K562 (cell line): ENCODE measurements at regions of chr6 and their contacts with region 1.

Region 1: GRCh38 chr6:154661768-154662167 is 71.4 kb upstream of the SCAF8 start:
- DNase-seq: no peak
- ATAC-seq: 0 out of 3 replicates have a peak, but pooled peaks have one; percentile 49
- H3K4me3 ChIP-seq: no peak overlapping the region
- H3K27ac ChIP-seq: no peak overlapping the region
- H3K4me1 ChIP-seq: no peaks in the 10 kb centered on the region
- H3K27me3 ChIP-seq: peaks cover 15 to 17% of the 10 kb centered on the region in 2 experiments; a peak in 4 of 5 replicates
- CTCF ChIP-seq: peak; percentile 18 to 37 (median 24); a peak in 1 of 6 replicates
- EP300 ChIP-seq: no peak
- POLR2A ChIP-seq: no peak
- RAD21 ChIP-seq: 0 out of 4 replicates have a peak, but pooled peaks of 1 of the 2 experiments have one; percentile 11

Region 2: DNA sequence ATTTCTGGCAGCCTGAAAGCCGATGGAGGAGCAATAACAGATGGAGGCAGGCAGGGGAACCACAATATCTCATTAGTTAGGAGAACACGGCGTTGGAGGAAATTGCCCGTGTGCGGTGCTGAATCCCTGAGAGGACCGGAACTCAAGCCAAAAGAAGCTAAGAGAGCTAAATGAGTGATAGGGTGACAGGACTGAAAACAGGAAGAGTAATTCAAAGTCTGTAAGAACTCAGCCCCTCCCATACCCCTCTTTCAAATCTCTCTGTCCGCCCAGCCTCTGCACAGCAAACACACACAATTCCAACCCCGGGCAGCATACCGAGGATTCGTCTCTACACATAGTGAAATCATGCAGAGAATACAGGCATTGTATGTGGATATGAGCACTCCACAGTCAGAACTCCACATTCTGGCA is 302.6 kb before region 1 on chr6:
- CTCF ChIA-PET with region 1: no interaction called
- POLR2A ChIA-PET with region 1: no interaction called
- in situ Hi-C with region 1: no loop called
- intact Hi-C with region 1: loop called (anchors 5 kb)
- DNase-seq: peak in 1 of 4 experiments; percentile 13
- ATAC-seq: peak; percentile 50
- H3K4me3 ChIP-seq: no peak overlapping the region
- H3K27ac ChIP-seq: no peak overlapping the region
- H3K4me1 ChIP-seq: peaks cover 0 to 9% of the 10 kb centered on the region in 2 experiments; a peak in 1 of 5 replicates
- H3K27me3 ChIP-seq: peaks cover 16 to 21% of the 10 kb centered on the region in 2 experiments; a peak in 4 of 5 replicates
- CTCF ChIP-seq: no peak
- EP300 ChIP-seq: no peak
- POLR2A ChIP-seq: no peak
- RAD21 ChIP-seq: no peak

Region 3: DNA sequence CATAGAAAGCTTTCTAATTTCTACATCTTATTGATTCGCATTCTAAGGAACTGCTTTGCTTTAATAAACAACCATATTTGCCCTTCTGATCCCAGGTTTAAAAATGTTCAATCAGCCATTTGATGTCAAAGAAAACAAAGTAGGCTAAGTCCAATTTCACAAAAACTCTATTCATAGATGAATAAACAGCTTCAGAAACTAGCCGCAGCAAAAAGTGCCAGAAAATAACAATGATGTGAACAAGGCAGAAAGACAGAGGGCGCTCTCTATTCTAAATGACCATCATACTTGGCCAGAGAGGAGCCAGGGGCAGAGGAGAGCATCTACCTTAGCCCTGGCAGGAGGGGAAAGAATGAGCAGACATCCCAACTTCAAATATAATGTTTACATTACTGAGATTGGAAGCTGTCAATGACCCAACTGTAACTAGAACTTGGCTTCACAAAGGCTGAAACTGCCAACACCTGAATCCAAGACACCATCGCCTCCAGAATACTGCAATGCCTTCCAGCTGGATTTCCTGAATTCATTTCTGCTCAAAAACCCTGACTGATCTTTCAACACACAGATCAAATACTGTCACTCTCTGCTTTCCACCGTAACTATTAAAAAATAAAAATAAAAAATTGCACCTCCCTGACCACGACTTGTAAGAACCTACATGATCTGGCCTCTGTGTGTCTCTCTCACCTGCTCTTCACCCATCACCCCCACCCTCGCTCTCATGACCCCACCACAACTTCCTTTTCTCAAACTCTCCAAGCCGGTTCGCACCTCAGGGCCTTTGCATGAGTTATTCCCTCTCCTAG is 160.8 kb before region 1 on chr6:
- CTCF ChIA-PET with region 1: no interaction called
- POLR2A ChIA-PET with region 1: no interaction called
- in situ Hi-C with region 1: no loop called
- intact Hi-C with region 1: loop called (anchors 1 kb)
- DNase-seq: peak in 3 of 4 experiments; percentile 40 to 62 (median 57)
- ATAC-seq: peak; percentile 85
- H3K4me3 ChIP-seq: no peak overlapping the region
- H3K27ac ChIP-seq: no peak overlapping the region
- H3K4me1 ChIP-seq: peaks cover 5 to 6% of the 10 kb centered on the region in 2 experiments; a peak in 4 of 5 replicates
- H3K27me3 ChIP-seq: no peaks in the 10 kb centered on the region
- CTCF ChIP-seq: peak; percentile 75 to 82 (median 77)
- EP300 ChIP-seq: no peak
- POLR2A ChIP-seq: no peak
- RAD21 ChIP-seq: peak; percentile 34 to 49; a peak in 3 of 4 replicates

Region 4: GRCh38 chr6:154638369-154638768 is 23.4 kb before region 1 on chr6:
- CTCF ChIA-PET with region 1: no interaction called
- POLR2A ChIA-PET with region 1: no interaction called
- in situ Hi-C with region 1: no loop called
- intact Hi-C with region 1: no loop called
- DNase-seq: no peak
- ATAC-seq: no peak
- H3K4me3 ChIP-seq: no peak overlapping the region
- H3K27ac ChIP-seq: no peak overlapping the region
- H3K4me1 ChIP-seq: no peaks in the 10 kb centered on the region
- H3K27me3 ChIP-seq: peaks cover 5% of the 10 kb centered on the region in 2 experiments; a peak in 4 of 5 replicates
- CTCF ChIP-seq: no peak
- EP300 ChIP-seq: no peak
- POLR2A ChIP-seq: no peak
- RAD21 ChIP-seq: no peak